Activated B cell treated with CpG ODN at 0.5 μM for 24 hours (primary cell): ENCODE measurements at regions of chr1 and their contacts with region 1.

Region 1: DNA sequence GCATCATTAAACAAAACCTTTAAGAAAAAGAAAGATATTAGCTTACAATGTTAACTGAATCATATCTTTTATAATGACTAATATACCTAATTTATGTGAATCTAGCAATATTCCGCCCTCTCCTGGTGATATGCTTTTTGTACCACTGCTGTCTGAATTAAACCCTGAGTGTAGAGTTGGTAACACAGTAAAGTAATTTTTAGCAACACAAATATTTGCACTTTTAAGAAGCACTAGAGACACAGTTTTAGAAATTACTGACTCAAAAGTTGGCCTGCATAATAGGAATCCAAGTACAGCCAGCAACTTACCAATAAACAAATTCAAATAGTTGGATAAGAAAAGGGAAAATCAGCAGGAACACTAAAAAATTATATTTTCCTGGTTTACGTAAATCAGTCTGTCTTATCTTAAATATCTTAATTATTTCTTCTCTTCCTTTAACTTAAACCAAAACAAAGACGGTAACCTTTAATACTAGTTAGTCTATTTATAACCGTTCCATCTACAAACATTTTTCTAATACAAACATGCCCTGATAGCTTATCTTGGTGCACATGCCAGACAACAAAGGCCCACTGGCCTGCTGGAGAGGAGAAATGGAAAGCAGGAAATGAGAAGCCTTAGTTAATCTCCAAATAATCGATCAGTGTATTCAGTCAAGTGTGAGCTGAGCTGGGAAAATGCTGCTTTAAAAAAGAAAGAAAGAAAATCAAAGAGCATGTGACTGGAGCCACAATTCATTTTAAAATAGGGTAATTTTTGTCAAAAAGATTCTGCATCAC is 246.0 kb downstream of the RERE start:
- DNase-seq: no peak
- ATAC-seq: no peak
- H3K4me3 Mint-ChIP-seq: no peak overlapping the region
- H3K27ac Mint-ChIP-seq: no peak overlapping the region
- H3K4me1 Mint-ChIP-seq: peaks cover 11% of the 10 kb centered on the region
- H3K27me3 Mint-ChIP-seq: no peaks in the 10 kb centered on the region
- CTCF ChIP-seq: no peak

Region 2: DNA sequence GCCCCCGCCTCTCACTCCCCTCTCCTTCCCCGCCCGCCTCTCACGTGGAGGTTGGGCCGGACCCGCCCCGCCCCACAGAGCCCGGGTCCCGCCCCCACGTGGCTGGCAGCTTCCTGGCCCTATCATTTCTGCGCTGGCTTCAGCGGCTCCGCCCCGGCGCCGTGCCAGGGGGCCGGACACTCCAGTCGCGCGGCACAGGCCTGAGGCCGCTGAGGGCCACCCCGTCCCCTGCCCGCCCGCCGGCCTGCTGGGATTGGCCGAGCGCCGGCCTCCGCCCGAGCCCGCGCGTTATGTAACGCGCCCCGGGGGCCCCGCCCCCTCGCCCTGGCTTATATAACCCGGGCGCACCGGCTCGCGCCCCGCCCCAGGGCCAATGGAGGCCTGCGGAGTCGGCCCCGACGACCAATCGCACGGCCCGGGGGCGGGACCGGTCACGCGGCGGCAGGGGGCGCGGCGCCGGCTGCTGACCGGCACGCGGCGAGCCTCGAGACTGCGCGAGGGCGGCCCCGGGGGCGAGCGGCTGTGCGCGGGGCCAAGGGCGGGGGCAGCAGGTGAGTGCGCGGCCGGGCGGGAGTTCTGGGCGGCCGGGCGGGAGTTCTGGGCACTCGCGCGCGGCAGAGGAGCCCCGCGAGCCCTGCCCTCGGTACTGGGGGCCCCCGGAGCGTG is 787.4 kb before region 1 on chr1 and contains the start of gene PER3:
- CTCF ChIA-PET with region 1: no interaction called
- POLR2A ChIA-PET with region 1: no interaction called
- intact Hi-C with region 1: no loop called
- DNase-seq: peak; percentile 95
- ATAC-seq: peak; percentile 92
- H3K4me3 Mint-ChIP-seq: peak within 1 kb of the TSS; percentile 80
- H3K27ac Mint-ChIP-seq: no peak within 1 kb of the TSS
- H3K4me1 Mint-ChIP-seq: peaks cover 26% of the 10 kb centered on the region
- H3K27me3 Mint-ChIP-seq: no peaks in the 10 kb centered on the region
- CTCF ChIP-seq: no peak
- total RNA-seq, gene PER3: 2.7 and 3.3 TPM in 2 replicates

Region 3: DNA sequence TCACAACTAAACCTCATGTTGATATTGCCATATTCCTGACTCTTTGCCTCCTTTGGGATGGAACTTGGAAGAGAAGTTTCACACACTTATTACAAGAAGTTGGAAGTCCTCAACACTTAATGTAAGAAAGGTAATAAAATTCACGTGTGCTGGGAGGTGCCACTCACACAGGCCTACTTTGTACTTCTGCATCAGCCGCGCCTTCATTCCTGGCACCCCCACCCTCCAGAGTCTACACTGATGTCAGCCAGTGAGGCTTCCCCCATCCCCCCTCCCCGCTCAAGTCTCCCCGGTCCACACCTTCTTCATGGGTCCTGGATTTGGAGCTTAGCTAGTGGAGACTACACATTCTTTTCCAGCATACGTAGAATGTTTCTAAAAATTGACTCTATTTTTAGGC is 278.3 kb before region 1 on chr1:
- CTCF ChIA-PET with region 1: no interaction called
- POLR2A ChIA-PET with region 1: no interaction called
- intact Hi-C with region 1: no loop called
- DNase-seq: no peak
- ATAC-seq: no peak
- H3K4me3 Mint-ChIP-seq: no peak overlapping the region
- H3K27ac Mint-ChIP-seq: no peak overlapping the region
- H3K4me1 Mint-ChIP-seq: no peaks in the 10 kb centered on the region
- H3K27me3 Mint-ChIP-seq: peaks cover 13% of the 10 kb centered on the region
- CTCF ChIP-seq: no peak

Region 4: GRCh38 chr1:8545078-8545477 is 26.3 kb before region 1 on chr1:
- CTCF ChIA-PET with region 1: no interaction called
- POLR2A ChIA-PET with region 1: no interaction called
- intact Hi-C with region 1: no loop called
- DNase-seq: no peak
- ATAC-seq: peak; percentile 56
- H3K4me3 Mint-ChIP-seq: no peak overlapping the region
- H3K27ac Mint-ChIP-seq: peak overlapping the region; percentile 25
- H3K4me1 Mint-ChIP-seq: peaks cover 27% of the 10 kb centered on the region
- H3K27me3 Mint-ChIP-seq: no peaks in the 10 kb centered on the region
- CTCF ChIP-seq: no peak

Region 5: GRCh38 chr1:8727809-8728213 is 156.4 kb after region 1 on chr1:
- CTCF ChIA-PET with region 1: interaction called, 180 read pairs
- POLR2A ChIA-PET with region 1: interaction called, 3 read pairs
- intact Hi-C with region 1: no loop called
- DNase-seq: no peak
- ATAC-seq: no peak
- H3K4me3 Mint-ChIP-seq: no peak overlapping the region
- H3K27ac Mint-ChIP-seq: no peak overlapping the region
- H3K4me1 Mint-ChIP-seq: peaks cover 18% of the 10 kb centered on the region
- H3K27me3 Mint-ChIP-seq: no peaks in the 10 kb centered on the region
- CTCF ChIP-seq: no peak

Region 6: DNA sequence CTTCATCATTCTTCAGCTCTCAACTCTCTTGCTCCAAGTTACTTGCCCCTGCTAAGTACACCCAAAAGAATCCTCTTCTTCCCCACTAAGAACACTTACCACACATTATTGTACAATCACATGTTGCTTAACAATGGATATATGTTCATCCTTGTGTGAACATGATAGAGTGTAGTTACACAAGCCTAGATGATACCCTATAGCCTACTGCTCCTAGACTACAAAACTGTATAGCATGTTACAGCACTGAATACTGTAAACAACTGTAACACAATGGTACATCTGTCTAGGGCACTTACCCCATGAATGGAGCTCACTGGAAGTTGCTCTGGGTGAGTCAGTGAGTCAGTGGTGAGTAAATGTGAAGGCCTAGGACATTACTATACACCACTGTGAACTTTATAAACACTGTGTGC is 168.7 kb after region 1 on chr1:
- CTCF ChIA-PET with region 1: no interaction called
- POLR2A ChIA-PET with region 1: interaction called, 15 read pairs
- intact Hi-C with region 1: no loop called
- DNase-seq: no peak
- ATAC-seq: no peak
- H3K4me3 Mint-ChIP-seq: no peak overlapping the region
- H3K27ac Mint-ChIP-seq: no peak overlapping the region
- H3K4me1 Mint-ChIP-seq: peaks cover 10% of the 10 kb centered on the region
- H3K27me3 Mint-ChIP-seq: no peaks in the 10 kb centered on the region
- CTCF ChIP-seq: no peak